ENCODE measurements at regions of chr5 and their contacts with region 1.

Region 1: GRCh38 chr5:125277494-125278154 is 531.2 kb upstream of the ZNF608 start:
- DNase-seq: peak; percentile 93
- H3K4me3 ChIP-seq: no peak overlapping the region
- H3K27ac ChIP-seq: peak overlapping the region; percentile 85
- H3K4me1 ChIP-seq: peaks cover 46% of the 10 kb centered on the region
- H3K27me3 ChIP-seq: no peaks in the 10 kb centered on the region
- CTCF ChIP-seq: no peak
- POLR2A ChIP-seq: no peak

Region 2: DNA sequence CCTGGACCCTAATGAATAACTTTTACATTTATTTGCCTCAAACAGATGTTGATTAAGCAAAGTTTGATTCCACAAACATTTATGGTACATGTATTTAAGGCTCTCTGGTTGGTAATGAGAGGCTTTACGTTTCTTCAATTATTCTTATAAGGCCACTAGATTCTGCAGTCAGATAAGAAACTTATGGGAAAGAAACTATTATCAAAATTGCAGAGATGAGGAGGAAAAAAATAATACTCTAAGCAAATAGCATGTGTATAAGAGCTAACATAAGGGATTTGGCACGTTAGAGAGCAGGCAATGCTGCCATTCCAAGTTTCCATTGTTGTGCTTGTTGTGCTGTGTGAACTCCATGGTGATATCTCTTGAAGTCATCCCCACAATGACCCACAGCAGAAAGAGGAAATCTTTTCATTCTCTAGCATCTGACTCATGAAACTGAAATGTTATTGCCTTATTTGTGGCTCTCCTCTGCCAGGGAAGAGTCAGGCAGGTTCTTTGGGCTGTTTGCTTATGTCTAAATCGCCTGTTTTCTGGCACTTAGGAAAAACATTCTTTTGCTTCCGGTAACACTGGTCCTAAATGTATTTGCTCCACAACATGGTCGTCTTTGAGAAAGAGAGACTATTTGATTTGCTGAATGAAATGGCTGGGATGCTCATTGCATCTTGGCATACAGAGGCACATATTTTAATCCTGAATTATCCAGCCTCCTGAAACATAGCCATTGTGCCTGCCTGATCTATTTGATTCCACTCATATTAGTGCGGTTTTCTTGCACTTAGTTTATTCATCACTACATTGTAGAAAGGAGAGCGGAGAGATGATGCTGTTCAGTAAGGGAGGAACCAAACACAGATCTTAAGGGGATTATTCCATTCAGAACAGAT is 1577.0 kb before region 1 on chr5:
- CTCF ChIA-PET with region 1: no interaction called
- POLR2A ChIA-PET with region 1: no interaction called
- dilution Hi-C with region 1: no loop called
- intact Hi-C with region 1: loop called (anchors 10 kb)
- DNase-seq: peak; percentile 99
- H3K4me3 ChIP-seq: no peak overlapping the region
- H3K27ac ChIP-seq: peak overlapping the region; percentile 93
- H3K4me1 ChIP-seq: peaks cover 21% of the 10 kb centered on the region
- H3K27me3 ChIP-seq: no peaks in the 10 kb centered on the region
- CTCF ChIP-seq: no peak
- POLR2A ChIP-seq: peak; percentile 27

Region 3: GRCh38 chr5:124996764-124997077 is 280.9 kb before region 1 on chr5:
- CTCF ChIA-PET with region 1: no interaction called
- POLR2A ChIA-PET with region 1: no interaction called
- dilution Hi-C with region 1: no loop called
- intact Hi-C with region 1: loop called (anchors 5 kb)
- DNase-seq: peak; percentile 68
- H3K4me3 ChIP-seq: no peak overlapping the region
- H3K27ac ChIP-seq: no peak overlapping the region
- H3K4me1 ChIP-seq: peaks cover 8% of the 10 kb centered on the region
- H3K27me3 ChIP-seq: no peaks in the 10 kb centered on the region
- CTCF ChIP-seq: no peak
- POLR2A ChIP-seq: no peak

Region 4: GRCh38 chr5:125262782-125263181 is 14.8 kb before region 1 on chr5:
- CTCF ChIA-PET with region 1: interaction called, 9 read pairs
- POLR2A ChIA-PET with region 1: no interaction called
- dilution Hi-C with region 1: no loop called
- intact Hi-C with region 1: loop called (anchors 1 kb)
- DNase-seq: peak; percentile 83
- H3K4me3 ChIP-seq: no peak overlapping the region
- H3K27ac ChIP-seq: peak overlapping the region; percentile 81
- H3K4me1 ChIP-seq: peaks cover 22% of the 10 kb centered on the region
- H3K27me3 ChIP-seq: no peaks in the 10 kb centered on the region
- CTCF ChIP-seq: no peak
- POLR2A ChIP-seq: no peak

Region 5: GRCh38 chr5:125311743-125312142 is 34.1 kb after region 1 on chr5:
- CTCF ChIA-PET with region 1: interaction called, 8 read pairs
- POLR2A ChIA-PET with region 1: no interaction called
- dilution Hi-C with region 1: no loop called
- intact Hi-C with region 1: loop called (anchors 1 kb)
- DNase-seq: peak; percentile 77
- H3K4me3 ChIP-seq: no peak overlapping the region
- H3K27ac ChIP-seq: peak overlapping the region; percentile 58
- H3K4me1 ChIP-seq: peaks cover 11% of the 10 kb centered on the region
- H3K27me3 ChIP-seq: no peaks in the 10 kb centered on the region
- CTCF ChIP-seq: no peak
- POLR2A ChIP-seq: no peak

Region 6: GRCh38 chr5:125659316-125660023 is 381.8 kb after region 1 on chr5:
- CTCF ChIA-PET with region 1: no interaction called
- POLR2A ChIA-PET with region 1: no interaction called
- dilution Hi-C with region 1: no loop called
- intact Hi-C with region 1: loop called (anchors 10 kb)
- DNase-seq: peak; percentile 79
- H3K4me3 ChIP-seq: peak overlapping the region in 1 of 3 experiments; percentile 21
- H3K27ac ChIP-seq: peak overlapping the region; percentile 81
- H3K4me1 ChIP-seq: peaks cover 22% of the 10 kb centered on the region
- H3K27me3 ChIP-seq: no peaks in the 10 kb centered on the region
- CTCF ChIP-seq: no peak
- POLR2A ChIP-seq: no peak

Measured in endothelial cell of umbilical vein (primary cell).